ENCODE measurements at regions of chr9 and their contacts with region 1.

Region 1: DNA sequence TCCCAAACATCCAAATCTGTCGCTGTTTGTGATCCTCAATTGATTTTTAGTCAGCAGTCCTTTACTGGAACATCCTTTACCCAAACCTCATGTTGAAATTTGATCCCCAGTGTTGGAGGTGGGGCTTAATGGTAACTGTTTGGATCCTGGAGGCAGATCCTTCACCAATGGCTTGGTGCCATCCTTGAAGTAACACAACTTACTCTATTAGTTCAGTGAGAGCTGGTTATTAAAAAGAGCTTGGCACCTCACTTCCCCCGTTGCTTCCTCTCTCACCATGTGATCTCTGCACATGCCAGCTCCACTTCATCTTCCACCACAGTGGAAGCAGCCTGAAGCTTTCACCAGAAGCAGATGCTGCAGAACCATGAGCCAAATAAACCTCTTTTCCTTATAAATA is 40.3 kb downstream of the DNAJB5 start:
- DNase-seq: peak in 1 of 5 donors; percentile 39
- ATAC-seq: peak in 2 of 4 donors; percentile 13 to 33
- H3K4me3 ChIP-seq: no peak overlapping the region
- H3K27ac ChIP-seq: no peak overlapping the region
- H3K4me1 ChIP-seq: peaks cover 0 to 16% (median 8%) of the 10 kb centered on the region in 12 donors
- H3K27me3 ChIP-seq: no peaks in the 10 kb centered on the region
- CTCF ChIP-seq: no peak
- POLR2A ChIP-seq: no peak

Region 2: DNA sequence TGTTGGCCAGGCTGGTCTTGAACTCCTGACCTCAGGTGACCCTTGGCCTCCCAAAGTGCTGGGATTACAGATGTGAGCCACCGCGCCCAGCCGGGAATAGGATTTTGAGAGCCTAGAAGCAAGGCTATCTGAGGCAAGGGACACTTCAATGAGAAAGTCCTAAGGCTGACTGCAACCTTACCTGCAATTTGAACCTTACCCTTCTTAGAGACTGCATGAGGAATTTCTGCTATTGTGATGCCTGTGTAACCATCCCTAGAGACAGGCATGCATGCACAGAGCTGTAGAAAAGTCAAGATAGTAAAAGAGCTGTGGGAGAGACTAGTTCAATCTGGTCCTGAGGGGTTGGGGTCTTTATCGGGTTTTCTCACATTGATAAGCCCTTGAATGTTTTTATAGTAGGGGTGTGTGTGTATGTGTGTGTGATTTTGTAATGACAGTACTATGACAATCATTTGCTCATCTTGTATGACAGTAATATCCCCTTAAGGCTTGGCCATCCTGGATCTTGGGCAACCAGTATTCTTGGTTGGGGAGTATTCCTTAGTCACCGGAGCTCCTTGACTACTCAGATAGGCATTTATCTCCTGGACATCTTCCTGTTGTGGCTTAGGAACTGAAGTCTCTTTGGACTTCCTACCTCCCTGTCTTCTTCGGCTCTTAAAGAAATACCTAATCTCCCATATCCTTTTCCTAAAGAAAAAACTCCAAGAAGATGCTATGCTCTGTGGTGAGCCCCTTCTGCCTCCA is 29.1 kb before region 1 on chr9:
- intact Hi-C with region 1: loop called in 1 of 10 experiments (anchors 1 kb)
- DNase-seq: no peak
- ATAC-seq: no peak
- H3K4me3 ChIP-seq: no peak overlapping the region
- H3K27ac ChIP-seq: no peak overlapping the region
- H3K4me1 ChIP-seq: peaks cover 0 to 28% (median 11%) of the 10 kb centered on the region in 12 donors
- H3K27me3 ChIP-seq: no peaks in the 10 kb centered on the region
- CTCF ChIP-seq: no peak
- POLR2A ChIP-seq: no peak

Measured in heart left ventricle (tissue), 16 donors.